Activated T-helper 1 cell treated with anti-CD3 and anti-CD28 coated beads, Interleukin-12 subunit alpha, Interleukin-12 subunit beta, Interleukin-2, Interleukin-4 antibody, amounts not matched to agents 30 ng/mL and 10 ng/mL and 1 ng/mL, durations not matched to agents 14 hours and 24 hours and 36 hours (primary cell): ENCODE measurements at regions of chr5 and their contacts with region 1.

Region 1: GRCh38 chr5:923281-923873 is 30.7 kb downstream of the TRIP13 start:
- DNase-seq: peak; percentile 64
- H3K4me3 Mint-ChIP-seq: no peak overlapping the region
- H3K27ac Mint-ChIP-seq: no peak overlapping the region
- H3K4me1 Mint-ChIP-seq: peaks cover 6% of the 10 kb centered on the region
- H3K27me3 Mint-ChIP-seq: peaks cover 24% of the 10 kb centered on the region

Region 2: GRCh38 chr5:994821-995220 is 71.4 kb after region 1 on chr5:
- intact Hi-C with region 1: loop called (anchors 1 kb)
- DNase-seq: no peak
- H3K4me3 Mint-ChIP-seq: no peak overlapping the region
- H3K27ac Mint-ChIP-seq: no peak overlapping the region
- H3K4me1 Mint-ChIP-seq: peaks cover 17% of the 10 kb centered on the region
- H3K27me3 Mint-ChIP-seq: peaks cover 3% of the 10 kb centered on the region

Region 3: DNA sequence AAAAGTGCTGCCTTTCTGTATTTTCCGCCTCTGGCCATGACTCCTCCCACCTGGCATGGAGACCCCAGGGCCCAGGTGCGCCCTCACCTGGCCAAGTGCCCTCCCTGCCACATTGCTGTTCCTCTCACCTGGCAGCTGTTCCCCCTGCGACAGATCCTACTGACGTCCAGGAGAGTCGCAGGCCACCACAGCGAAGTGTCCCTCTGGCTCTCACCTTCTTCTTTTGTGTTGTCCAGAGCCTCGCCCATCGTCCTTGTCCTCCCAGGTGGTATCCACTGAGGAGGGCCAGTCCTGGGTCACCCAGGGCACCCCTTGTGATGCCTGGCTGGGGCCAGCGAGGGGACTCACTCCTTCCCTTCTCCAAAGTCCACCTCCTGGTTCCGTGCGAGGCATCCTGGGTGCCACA is 87.9 kb after region 1 on chr5:
- intact Hi-C with region 1: loop called (anchors 1 kb)
- DNase-seq: peak; percentile 28
- H3K4me3 Mint-ChIP-seq: no peak overlapping the region
- H3K27ac Mint-ChIP-seq: no peak overlapping the region
- H3K4me1 Mint-ChIP-seq: peaks cover 17% of the 10 kb centered on the region
- H3K27me3 Mint-ChIP-seq: peaks cover 26% of the 10 kb centered on the region

Region 4: DNA sequence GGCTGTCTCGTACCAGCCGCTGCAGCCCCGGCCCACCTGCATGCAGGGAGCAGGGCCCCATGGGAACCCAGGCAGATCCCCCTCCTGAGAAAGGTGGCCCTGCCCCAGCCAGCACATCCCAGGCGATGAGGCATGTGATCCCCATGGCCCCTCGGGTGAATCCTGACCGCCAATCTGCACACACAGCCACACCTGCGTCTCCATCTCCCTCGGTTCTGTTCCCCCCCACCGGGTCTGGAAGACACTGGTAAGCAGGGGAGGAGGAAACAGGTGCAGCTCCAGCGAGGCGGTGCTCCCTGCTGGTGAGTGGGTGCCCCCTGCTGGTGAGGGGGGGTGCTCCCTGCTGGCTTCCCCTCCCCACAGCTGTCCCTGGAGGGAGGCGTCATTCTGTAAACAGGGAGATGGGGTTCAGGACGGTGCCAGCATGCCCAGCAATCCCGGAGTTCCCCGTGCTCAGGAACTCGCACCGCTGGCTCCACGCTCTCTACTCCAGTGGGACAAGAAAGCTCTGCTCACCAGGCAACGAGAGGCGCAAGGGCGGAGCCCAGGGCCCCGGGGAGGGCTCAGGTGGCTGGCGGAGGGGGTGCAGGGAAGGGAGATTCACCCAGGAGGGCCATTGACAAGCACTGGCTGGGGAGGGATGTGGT is 216.9 kb after region 1 on chr5:
- intact Hi-C with region 1: loop called (anchors 1 kb)
- DNase-seq: peak; percentile 71
- H3K4me3 Mint-ChIP-seq: no peak overlapping the region
- H3K27ac Mint-ChIP-seq: peak overlapping the region; percentile 53
- H3K4me1 Mint-ChIP-seq: peaks cover 6% of the 10 kb centered on the region
- H3K27me3 Mint-ChIP-seq: peaks cover 7% of the 10 kb centered on the region

Region 5: GRCh38 chr5:1167728-1168709 is 244.6 kb after region 1 on chr5:
- intact Hi-C with region 1: loop called (anchors 1 kb)
- DNase-seq: peak; percentile 61
- H3K4me3 Mint-ChIP-seq: peak overlapping the region; percentile 67
- H3K27ac Mint-ChIP-seq: peak overlapping the region; percentile 56
- H3K4me1 Mint-ChIP-seq: peaks cover 8% of the 10 kb centered on the region
- H3K27me3 Mint-ChIP-seq: peaks cover 7% of the 10 kb centered on the region

Region 6: DNA sequence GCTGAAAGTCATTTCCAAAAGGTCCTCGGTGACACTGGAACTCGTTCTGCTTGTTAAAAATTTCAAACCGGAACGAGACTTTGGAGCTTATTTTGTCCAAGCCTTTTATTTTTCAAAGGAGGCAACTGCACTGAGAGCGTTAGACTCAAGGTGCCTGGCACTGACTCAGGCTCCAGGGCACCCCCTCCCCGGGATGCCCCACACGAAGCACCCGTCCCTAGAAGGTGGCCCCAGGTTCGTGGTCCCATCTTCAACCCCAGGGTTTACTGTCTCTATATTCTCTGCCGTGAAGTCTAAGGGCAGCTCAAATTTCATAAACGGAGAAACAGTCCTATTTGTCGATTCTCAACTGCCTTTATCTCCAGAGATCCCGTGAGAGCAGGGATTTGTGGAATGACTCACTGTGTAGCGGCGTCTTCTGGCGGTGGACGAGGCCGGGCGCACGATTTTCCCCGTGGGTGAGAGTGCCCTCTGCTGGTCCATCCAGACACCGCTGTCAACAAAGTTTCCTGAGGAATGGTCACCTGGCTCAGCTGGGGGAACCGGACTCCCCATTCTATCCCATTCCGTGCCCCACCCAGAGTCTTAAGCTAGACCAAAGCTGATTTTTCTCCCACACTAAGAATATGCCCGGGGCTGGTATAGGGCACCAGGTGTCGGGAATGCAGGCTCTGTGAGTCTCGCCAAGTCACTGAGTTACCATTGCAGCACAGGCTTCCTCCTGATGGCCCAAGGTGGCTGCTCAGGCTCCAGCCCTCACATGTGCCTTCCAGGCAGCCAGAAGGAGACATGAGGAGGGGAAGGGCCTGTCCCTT is 251.0 kb after region 1 on chr5:
- intact Hi-C with region 1: loop called (anchors 2 kb)
- DNase-seq: peak; percentile 16
- H3K4me3 Mint-ChIP-seq: no peak overlapping the region
- H3K27ac Mint-ChIP-seq: no peak overlapping the region
- H3K4me1 Mint-ChIP-seq: no peaks in the 10 kb centered on the region
- H3K27me3 Mint-ChIP-seq: peaks cover 4% of the 10 kb centered on the region

Region 7: DNA sequence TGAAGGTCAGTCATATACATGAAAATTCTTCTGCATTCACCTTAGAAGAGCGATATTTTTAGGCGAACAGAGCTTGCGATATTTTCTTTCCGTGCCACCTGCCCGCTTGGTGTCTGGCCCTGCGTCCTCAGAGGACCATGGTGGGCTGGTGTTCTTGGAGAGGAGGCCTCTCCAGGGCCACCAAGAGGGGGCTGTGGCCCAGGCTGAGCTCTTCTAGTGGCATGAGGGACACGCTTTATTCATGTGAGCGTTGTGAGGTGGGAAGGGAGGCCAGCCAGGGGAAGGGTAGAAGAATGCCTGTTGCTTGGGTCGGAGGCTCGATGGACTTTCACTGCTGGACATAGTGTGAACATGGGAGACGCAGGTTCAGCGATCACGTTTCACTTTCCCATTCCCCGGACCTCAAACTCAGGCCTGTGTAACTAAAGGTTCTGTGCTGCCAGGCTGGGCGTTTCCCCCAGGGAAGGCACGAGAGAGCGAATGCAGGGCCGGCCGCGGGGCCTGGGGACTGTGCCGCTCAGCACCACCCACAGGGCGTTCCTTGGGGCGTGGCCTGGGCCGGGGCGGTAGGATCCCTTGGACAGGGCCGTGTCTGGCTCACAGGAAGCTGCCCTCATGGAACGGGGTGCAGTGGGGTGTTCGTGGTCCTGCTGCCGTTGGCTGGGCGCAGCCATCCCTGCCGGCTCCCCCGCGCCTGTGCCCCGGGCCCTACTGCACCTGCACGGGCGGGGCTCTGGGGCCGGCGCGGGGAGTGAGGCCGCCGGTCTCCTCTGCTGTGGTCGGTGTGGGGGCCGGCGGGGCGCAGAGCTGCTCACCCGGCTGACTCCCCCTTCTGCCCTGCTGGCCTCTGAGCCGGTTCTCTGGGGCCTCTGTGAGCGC is 462.3 kb after region 1 on chr5:
- intact Hi-C with region 1: no loop called
- DNase-seq: peak; percentile 82
- H3K4me3 Mint-ChIP-seq: peak overlapping the region; percentile 94
- H3K27ac Mint-ChIP-seq: peak overlapping the region; percentile 97
- H3K4me1 Mint-ChIP-seq: peaks cover 18% of the 10 kb centered on the region
- H3K27me3 Mint-ChIP-seq: peaks cover 5% of the 10 kb centered on the region